ENCODE measurements at regions of chr1 and their contacts with region 1.

Region 1: GRCh38 chr1:17236779-17237560 is 11.9 kb upstream of the PADI3 start:
- DNase-seq: peak; percentile 85
- ATAC-seq: peak; percentile 70
- H3K4me3 ChIP-seq: no peak overlapping the region
- H3K27ac ChIP-seq: no peak overlapping the region
- H3K4me1 ChIP-seq: peaks cover 29 to 62% of the 10 kb centered on the region in 2 experiments
- H3K27me3 ChIP-seq: peaks cover 11% of the 10 kb centered on the region; the same call in 1 of the 2 replicates
- CTCF ChIP-seq: peak in 2 of 3 experiments; percentile 76 to 88; a peak in 4 of 6 replicates
- POLR2A ChIP-seq: no peak
- RAD21 ChIP-seq: no peak

Region 2: GRCh38 chr1:16954579-16954978 is 282.4 kb before region 1 on chr1:
- CTCF ChIA-PET with region 1: no interaction called
- POLR2A ChIA-PET with region 1: no interaction called
- RAD21 ChIA-PET with region 1: no interaction called
- intact Hi-C with region 1: loop called (anchors 5 kb)
- DNase-seq: no peak
- ATAC-seq: no peak
- H3K4me3 ChIP-seq: no peak overlapping the region
- H3K27ac ChIP-seq: no peak overlapping the region
- H3K4me1 ChIP-seq: peaks cover 0 to 3% of the 10 kb centered on the region in 2 experiments; a peak in 2 of 4 replicates
- H3K27me3 ChIP-seq: no peaks in the 10 kb centered on the region
- CTCF ChIP-seq: no peak
- POLR2A ChIP-seq: no peak
- RAD21 ChIP-seq: no peak

Region 3: GRCh38 chr1:17250601-17251000 is 13.6 kb after region 1 on chr1:
- CTCF ChIA-PET with region 1: interaction called, 14 read pairs
- POLR2A ChIA-PET with region 1: interaction called, 6 read pairs
- RAD21 ChIA-PET with region 1: interaction called in 1 of 2 experiments, 3 read pairs
- intact Hi-C with region 1: no loop called
- DNase-seq: no peak
- ATAC-seq: peak; percentile 82
- H3K4me3 ChIP-seq: 0 out of 4 replicates have a peak overlapping the region, but pooled peaks of 1 of the 2 experiments have one; percentile 2
- H3K27ac ChIP-seq: peak overlapping the region; percentile 12; the same call in 1 of the 2 replicates
- H3K4me1 ChIP-seq: peaks cover 34 to 57% of the 10 kb centered on the region in 2 experiments
- H3K27me3 ChIP-seq: no peaks in the 10 kb centered on the region; the same call in 1 of the 2 replicates
- CTCF ChIP-seq: no peak
- POLR2A ChIP-seq: no peak
- RAD21 ChIP-seq: no peak

Region 4: DNA sequence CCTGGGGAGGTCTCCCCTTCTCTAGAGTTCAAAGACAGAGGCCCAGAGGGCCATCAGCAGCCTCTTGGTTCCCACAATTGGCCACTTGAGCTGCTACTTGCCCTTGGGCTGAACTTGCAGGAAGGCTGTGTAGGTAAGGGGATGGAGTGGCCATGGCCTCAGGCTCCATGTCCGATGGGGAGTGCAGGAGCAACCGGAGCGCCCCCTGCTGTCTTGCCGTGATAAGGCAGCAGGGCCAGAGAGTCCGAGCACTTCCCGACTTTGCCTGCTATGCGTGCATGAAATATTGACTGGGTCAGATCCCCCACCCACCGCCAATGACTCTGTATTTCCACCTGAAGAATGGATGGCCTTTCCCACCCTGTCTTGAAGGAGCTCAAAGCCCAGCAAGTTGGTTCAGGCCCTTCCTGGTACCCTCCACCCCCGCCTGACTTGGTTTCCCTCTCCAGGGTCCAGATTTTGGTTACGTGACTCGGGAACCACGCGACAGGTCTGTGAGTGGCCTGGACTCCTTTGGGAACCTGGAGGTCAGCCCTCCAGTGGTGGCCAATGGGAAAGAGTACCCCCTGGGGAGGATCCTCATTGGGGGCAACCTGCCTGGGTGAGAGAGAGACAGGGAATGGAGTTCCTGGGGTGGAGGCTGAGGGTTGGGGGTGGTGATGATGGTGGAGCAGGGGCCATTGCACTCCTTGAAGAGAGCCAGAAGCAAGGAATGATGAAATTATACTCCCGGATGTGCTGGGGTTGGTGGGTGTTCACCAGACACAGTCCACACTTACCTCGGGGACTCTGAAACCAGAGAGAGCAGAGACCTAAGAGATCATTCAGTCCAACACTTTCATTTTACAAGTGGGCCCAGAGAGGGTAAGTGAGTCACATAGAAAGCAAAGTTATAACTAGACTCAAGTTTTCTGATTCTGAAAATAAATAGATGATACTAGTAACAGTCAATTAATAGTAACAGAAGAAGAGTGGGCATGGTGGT is 37.5 kb after region 1 on chr1:
- CTCF ChIA-PET with region 1: interaction called, 5 read pairs
- POLR2A ChIA-PET with region 1: no interaction called
- RAD21 ChIA-PET with region 1: interaction called in 1 of 2 experiments, 3 read pairs
- intact Hi-C with region 1: loop called (anchors 1 kb)
- DNase-seq: peak; percentile 42
- ATAC-seq: peak; percentile 98
- H3K4me3 ChIP-seq: no peak overlapping the region
- H3K27ac ChIP-seq: no peak overlapping the region
- H3K4me1 ChIP-seq: peaks cover 0 to 12% of the 10 kb centered on the region in 2 experiments; a peak in 2 of 4 replicates
- H3K27me3 ChIP-seq: no peaks in the 10 kb centered on the region
- CTCF ChIP-seq: peak; percentile 77 to 97 (median 89)
- POLR2A ChIP-seq: no peak
- RAD21 ChIP-seq: peak; percentile 86